Psoas muscle (tissue), 8 donors: ENCODE measurements at regions of chr2 and their contacts with region 1.

Region 1: DNA sequence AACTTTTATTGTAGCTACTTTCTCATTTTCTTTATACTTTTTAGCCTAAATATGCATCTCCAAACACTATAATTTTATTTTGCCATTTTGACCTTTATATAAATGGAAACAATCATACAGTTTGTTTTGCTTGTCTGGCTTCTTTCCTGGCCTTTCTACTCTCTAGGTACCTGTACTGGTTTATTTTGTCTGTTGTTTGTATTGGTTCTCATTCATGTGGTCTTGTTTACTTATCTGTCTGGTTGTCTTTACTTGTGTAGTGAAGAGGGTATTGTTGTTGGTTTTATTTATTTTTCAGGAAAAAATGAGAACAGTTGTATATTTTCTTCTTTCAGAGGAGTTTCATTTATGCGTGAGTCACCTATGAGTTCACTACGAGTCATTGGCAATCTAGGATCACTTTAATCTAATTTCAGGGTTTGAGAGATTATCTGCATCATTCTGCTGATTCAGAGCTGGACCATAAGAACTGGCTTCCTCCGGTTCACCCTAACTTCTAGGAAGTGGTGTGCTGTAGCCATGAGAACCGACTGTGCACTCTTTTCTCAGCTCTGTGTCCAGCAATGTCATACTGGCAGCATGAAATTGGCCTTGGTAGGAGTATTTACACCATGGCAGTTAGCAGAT is 33.1 kb upstream of the HDAC4 start:
- DNase-seq: no peak
- ATAC-seq: no peak
- H3K4me3 ChIP-seq: no peak overlapping the region
- H3K27ac ChIP-seq: no peak overlapping the region
- H3K4me1 ChIP-seq: no peaks in the 10 kb centered on the region
- H3K27me3 ChIP-seq: no peaks in the 10 kb centered on the region
- CTCF ChIP-seq: no peak

Region 2: DNA sequence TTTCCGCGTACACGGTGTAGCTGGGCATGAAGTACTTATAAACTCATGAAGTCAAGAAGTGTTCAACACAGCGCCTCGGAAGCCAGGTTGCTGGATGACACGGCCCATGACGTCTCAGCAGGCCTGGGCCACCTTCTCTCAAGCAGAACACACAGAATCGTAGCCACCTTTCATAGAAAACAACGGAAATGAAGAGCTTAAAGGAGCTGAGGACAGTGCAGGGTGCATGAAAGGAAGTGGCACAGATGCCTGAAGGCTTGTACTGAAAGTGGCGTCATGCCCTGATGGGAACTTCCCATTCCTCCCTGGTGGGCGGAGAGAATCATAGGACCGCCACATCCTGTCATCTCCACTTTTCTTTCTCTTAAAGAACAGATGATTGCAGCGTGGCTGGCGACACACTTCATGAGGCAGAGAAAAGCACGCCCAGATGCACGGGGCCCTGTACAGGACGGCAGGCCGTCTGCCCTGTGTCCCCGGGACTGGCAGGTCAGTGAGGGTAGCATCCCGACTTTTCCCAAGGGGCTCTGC is 64.2 kb before region 1 on chr2:
- intact Hi-C with region 1: no loop called
- DNase-seq: peak in 1 of 2 donors; percentile 40
- ATAC-seq: peak in 2 of 4 donors; percentile 9 to 25
- H3K4me3 ChIP-seq: no peak overlapping the region
- H3K27ac ChIP-seq: no peak overlapping the region
- H3K4me1 ChIP-seq: no peaks in the 10 kb centered on the region
- H3K27me3 ChIP-seq: no peaks in the 10 kb centered on the region
- CTCF ChIP-seq: no peak

Region 3: DNA sequence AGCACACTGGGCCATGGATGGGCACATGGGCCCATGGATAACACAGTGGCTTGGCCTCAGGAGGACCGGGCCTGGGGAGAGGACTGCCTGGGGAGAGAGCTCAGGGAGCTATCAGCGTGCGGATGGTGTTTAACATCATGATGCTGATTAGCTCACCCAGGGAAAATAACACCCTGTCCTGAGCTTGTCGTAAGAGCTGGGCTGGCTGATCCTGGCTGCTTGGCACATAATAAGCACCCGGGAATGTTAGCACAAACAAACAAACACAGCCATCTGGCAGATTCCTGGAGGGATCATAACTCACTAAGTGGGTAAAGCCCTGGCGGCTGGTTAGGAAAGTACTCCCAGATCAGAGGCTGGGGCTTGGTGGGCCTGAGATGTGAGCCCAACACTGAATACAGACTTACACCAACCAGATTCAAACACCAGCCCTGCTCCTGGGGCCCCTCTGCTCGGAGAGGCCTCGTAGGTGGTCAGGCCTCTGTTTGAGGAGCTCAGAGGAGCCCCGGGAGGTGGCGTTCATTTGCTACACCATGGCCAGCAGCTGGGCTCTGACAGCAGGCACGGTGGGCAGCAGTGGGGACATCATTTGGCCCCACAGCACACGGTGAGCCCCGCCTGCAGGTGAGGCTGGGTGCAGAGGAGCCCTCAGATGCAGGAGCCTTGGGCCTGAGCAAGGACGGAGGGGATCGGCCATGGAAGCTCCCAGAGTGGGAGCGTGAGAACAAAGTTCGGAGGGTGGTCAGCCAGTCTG is 160.3 kb after region 1 on chr2:
- intact Hi-C with region 1: no loop called
- DNase-seq: peak in 1 of 2 donors; percentile 21
- ATAC-seq: peak in 2 of 4 donors; percentile 62 to 77
- H3K4me3 ChIP-seq: no peak overlapping the region
- H3K27ac ChIP-seq: no peak overlapping the region
- H3K4me1 ChIP-seq: no peaks in the 10 kb centered on the region
- H3K27me3 ChIP-seq: no peaks in the 10 kb centered on the region
- CTCF ChIP-seq: no peak

Region 4: GRCh38 chr2:240806006-240806405 is 1372.1 kb after region 1 on chr2:
- intact Hi-C with region 1: loop called in 1 of 2 experiments (anchors 10 kb)
- DNase-seq: no peak
- ATAC-seq: no peak
- H3K4me3 ChIP-seq: no peak overlapping the region
- H3K27ac ChIP-seq: no peak overlapping the region
- H3K4me1 ChIP-seq: no peaks in the 10 kb centered on the region
- H3K27me3 ChIP-seq: peaks cover 0 to 20% (median 0%) of the 10 kb centered on the region in 3 donors
- CTCF ChIP-seq: no peak